Sciatic nerve (tissue), 2 donors: ENCODE measurements at regions of chr2 and their contacts with region 1.

Region 1: DNA sequence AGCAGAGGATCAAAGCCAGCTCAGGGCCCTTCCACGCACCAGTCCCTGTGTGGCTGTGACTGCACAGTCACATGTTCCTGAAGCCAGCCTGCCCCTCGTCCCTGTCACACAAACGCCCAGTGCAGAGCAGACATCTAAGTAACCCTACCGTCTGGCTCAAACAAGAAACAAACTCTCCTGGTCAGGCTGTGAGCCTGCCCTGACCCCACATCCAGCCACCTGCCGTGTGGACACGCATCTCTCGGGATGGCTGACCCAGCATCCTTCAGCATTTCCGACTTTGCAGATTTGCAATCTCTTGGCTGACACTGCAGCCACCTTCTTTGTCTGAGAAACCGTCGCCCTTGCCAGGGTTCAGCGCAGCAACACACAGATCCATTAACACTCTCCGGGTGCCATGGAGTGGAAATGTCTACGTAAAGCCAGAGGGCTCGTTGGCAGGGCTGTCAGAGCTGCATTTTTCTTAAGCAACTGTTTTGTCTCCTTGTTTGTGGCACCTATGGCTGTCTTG is 82.3 kb upstream of the ASAP2 start:
- DNase-seq: no peak
- ATAC-seq: no peak

Region 2: GRCh38 chr2:7736646-7737305 is 1387.5 kb before region 1 on chr2:
- intact Hi-C with region 1: no loop called
- DNase-seq: no peak
- ATAC-seq: no peak

Region 3: GRCh38 chr2:8860239-8860638 is 264.0 kb before region 1 on chr2:
- intact Hi-C with region 1: loop called (anchors 10 kb)
- DNase-seq: no peak
- ATAC-seq: no peak

Region 4: GRCh38 chr2:8966123-8966908 is 158.0 kb before region 1 on chr2:
- intact Hi-C with region 1: no loop called
- DNase-seq: no peak
- ATAC-seq: no peak